ENCODE measurements at regions of chr12 and their contacts with region 1.

Region 1: DNA sequence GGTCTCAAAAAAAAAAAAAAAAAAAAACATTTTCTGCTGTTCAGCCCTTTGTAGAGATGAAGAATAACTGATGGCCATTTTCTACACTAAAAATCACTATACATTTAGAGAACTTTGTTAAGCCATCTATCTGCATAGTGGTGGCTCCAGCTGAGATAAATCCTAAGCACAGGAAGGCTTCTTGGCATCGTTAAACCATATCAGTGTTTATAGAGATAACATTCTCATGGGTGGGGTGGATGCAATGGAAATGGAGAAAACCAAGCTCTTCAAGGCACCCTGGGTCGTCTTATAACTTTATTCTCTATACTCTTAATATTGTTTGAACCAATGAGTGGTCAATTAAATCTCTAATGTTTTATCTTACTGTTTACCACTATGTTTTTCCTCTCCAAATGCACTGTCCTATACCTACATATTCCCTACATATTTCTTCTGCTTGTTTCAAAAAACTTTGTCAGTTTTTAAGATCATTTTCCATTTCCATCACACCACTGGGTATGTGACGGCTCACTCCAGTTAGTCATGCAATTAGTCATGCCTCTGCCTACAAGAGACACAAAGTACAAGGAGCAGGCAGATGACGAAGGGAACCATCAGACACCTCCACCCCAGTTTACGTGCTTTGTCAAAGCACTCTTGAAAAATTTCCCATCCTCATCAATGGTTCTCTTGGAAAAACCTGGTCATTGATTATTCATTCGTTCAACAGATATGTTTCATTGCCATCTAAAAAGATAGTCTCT is 119.4 kb upstream of the OVCH1 start:
- DNase-seq: no peak
- H3K4me3 Mint-ChIP-seq: no peak overlapping the region
- H3K27ac Mint-ChIP-seq: peak overlapping the region; percentile 73
- H3K4me1 Mint-ChIP-seq: peaks cover 11% of the 10 kb centered on the region
- H3K27me3 Mint-ChIP-seq: no peaks in the 10 kb centered on the region

Region 2: DNA sequence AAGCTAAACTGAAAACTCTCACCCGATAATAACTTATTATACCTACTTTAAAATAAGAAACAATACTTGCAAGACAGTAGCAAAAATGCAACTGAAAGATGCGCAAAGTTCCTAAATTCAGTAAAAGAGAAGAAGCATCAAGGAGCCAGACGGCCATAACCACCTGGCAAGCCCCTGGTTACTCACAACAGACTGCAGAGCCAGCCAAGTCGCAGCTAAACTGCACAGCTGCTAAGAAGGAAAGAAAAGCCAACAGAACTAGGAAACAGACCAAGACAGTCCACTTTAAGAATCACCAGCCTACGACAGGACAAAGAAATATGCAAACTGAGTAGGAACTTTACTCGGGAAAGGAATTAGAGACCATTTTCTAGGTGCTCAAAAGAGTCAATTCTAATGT is 39.0 kb after region 1 on chr12:
- intact Hi-C with region 1: no loop called
- DNase-seq: no peak
- H3K4me3 Mint-ChIP-seq: no peak overlapping the region
- H3K27ac Mint-ChIP-seq: no peak overlapping the region
- H3K4me1 Mint-ChIP-seq: no peaks in the 10 kb centered on the region
- H3K27me3 Mint-ChIP-seq: no peaks in the 10 kb centered on the region

Region 3: GRCh38 chr12:29782285-29782870 is 165.5 kb after region 1 on chr12:
- intact Hi-C with region 1: loop called (anchors 1 kb)
- DNase-seq: no peak
- H3K4me3 Mint-ChIP-seq: peak overlapping the region; percentile 63
- H3K27ac Mint-ChIP-seq: peak overlapping the region; percentile 52
- H3K4me1 Mint-ChIP-seq: peaks cover 16% of the 10 kb centered on the region
- H3K27me3 Mint-ChIP-seq: peaks cover 44% of the 10 kb centered on the region